Posterior cingulate gyrus (tissue), 11 donors: ENCODE measurements at regions of chr19 and their contacts with region 1.

Region 1: DNA sequence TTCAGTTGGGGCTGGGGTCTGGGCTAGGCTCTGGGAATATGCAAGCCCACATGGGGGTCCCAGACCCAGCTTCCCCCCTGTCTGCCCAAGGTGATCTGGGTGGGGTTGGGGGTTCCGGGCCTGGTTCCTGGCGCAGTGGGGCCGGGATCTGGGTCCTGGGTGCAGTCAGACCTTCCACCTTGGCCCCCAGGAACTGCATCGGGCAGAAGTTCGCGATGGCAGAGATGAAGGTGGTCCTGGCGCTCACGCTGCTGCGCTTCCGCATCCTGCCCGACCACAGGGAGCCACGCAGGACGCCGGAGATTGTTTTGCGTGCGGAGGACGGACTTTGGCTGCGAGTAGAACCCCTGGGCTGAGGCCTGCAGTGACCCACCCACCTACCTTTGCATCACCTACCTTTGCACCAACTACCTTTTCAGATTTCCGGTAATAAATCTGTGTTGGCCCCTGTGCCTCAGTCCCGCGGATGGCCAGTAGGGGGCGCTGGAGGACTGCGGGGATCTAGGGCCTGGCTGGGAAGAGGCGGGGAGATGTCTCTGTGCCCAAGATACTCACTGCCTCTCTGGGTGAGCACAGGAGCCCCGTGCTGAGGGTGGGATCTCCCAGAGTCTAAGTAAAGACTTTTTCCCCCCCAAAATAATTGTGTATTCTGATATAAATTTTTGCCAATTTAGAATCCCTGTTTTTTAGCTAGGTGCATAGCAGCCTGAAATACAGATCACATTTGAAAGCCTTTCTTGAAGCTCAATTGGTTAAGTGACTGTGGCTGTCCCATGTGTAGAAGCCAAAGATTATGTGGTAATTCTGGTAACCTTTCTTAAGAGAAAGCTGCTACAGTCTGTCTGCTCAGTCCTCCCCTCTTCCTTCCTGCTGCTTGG is 11.5 kb upstream of the CYP4F3 start:
- DNase-seq: peak; percentile 51 to 97 (median 82)

Region 2: GRCh38 chr19:15584541-15585115 is 44.6 kb before region 1 on chr19:
- intact Hi-C with region 1: no loop called
- DNase-seq: peak; percentile 58 to 95 (median 80)

Region 3: DNA sequence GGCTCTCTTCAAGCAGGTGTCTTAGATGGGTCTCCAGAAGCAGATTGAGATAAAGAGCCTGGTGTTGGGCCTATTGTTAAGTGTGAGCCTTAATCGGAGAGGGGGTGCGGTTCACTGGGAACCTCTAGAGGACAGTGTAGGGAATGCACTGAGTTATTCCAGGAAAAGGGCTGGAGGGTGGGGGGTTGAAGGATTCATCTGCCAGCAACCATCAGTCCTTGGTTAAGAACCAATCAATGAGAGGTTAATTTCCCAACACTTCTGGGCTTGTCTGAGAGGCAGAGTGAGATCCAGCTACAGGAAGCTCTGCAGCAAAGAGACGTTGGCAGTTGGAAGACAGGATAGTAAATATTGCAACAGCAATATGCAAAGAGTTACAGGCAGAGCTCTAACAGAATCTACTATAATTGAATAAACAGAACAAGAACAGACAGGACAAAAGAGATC is 239.9 kb after region 1 on chr19:
- intact Hi-C with region 1: loop called (anchors 2 kb)
- DNase-seq: peak in 4 of 10 donors; percentile 10 to 32 (median 22)

Region 4: DNA sequence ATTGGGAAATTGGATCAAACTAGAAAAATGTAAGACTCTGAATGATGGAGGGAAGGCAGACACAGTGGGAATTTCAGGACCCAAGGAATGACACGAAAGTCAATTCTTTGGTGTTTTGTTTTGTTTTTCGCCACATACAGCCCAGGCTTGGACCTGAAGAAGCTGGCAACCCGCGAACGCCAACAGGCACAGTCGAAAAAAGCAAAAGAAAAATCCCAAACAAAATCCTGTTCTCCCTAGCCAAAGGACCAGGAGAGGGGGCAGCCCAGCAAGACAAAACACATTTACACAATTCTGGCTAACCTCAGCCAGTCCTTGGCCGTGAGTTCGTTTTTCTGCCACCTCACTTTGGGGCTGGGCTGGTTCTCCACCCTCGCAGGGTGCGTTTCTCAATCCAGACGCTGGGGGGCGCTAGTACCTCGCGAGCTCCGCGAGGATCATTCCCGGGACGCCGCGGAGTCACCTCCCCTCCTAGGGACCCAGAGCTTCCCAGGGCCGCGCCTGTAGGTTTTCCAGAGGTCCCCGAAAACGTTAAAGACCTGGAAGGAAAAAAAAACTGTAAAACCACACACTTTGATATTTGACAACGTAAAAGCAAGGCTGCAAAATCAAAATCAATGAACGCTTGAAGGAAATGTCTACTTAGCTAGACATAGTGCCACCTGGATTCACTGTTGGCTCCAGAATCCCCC is 412.2 kb after region 1 on chr19:
- intact Hi-C with region 1: loop called (anchors 10 kb)
- DNase-seq: peak; percentile 59 to 97 (median 86)